ENCODE measurements at regions of chr19 and their contacts with region 1.

Region 1: GRCh38 chr19:3665681-3666544 is 34.4 kb downstream of the PIP5K1C start:
- DNase-seq: no peak
- ATAC-seq: peak; percentile 84
- H3K4me3 ChIP-seq: no peak overlapping the region
- H3K27ac ChIP-seq: no peak overlapping the region
- H3K4me1 ChIP-seq: peaks cover 7% of the 10 kb centered on the region
- H3K27me3 ChIP-seq: no peaks in the 10 kb centered on the region
- CTCF ChIP-seq: peak; percentile 86
- POLR2A ChIP-seq: no peak
- RAD21 ChIP-seq: peak; percentile 85

Region 2: GRCh38 chr19:3700221-3701032 is 34.5 kb after region 1 on chr19 and contains the start of gene PIP5K1C:
- CTCF ChIA-PET with region 1: no interaction called
- POLR2A ChIA-PET with region 1: no interaction called
- dilution Hi-C with region 1: no loop called
- in situ Hi-C with region 1: loop called (anchors 5 kb)
- intact Hi-C with region 1: loop called (anchors 1 kb)
- DNase-seq: peak; percentile 78
- ATAC-seq: peak; percentile 97
- H3K4me3 ChIP-seq: peak within 1 kb of the TSS; percentile 97
- H3K27ac ChIP-seq: peak within 1 kb of the TSS; percentile 77
- H3K4me1 ChIP-seq: peaks cover 8% of the 10 kb centered on the region; the same call in 1 of the 2 replicates
- H3K27me3 ChIP-seq: peaks cover 2% of the 10 kb centered on the region; the same call in 1 of the 2 replicates
- CTCF ChIP-seq: peak; percentile 87
- POLR2A ChIP-seq: peak; percentile 39; the same call in 1 of the 2 replicates
- RAD21 ChIP-seq: peak; percentile 70
- total RNA-seq, gene PIP5K1C: 10.8 and 13.6 TPM in 2 replicates

Region 3: GRCh38 chr19:3821857-3822364 is 156.0 kb after region 1 on chr19:
- CTCF ChIA-PET with region 1: no interaction called
- POLR2A ChIA-PET with region 1: no interaction called
- dilution Hi-C with region 1: no loop called
- in situ Hi-C with region 1: no loop called
- intact Hi-C with region 1: loop called (anchors 5 kb)
- DNase-seq: peak; percentile 10
- ATAC-seq: peak; percentile 93
- H3K4me3 ChIP-seq: no peak overlapping the region
- H3K27ac ChIP-seq: no peak overlapping the region
- H3K4me1 ChIP-seq: no peaks in the 10 kb centered on the region
- H3K27me3 ChIP-seq: peaks cover 15% of the 10 kb centered on the region
- CTCF ChIP-seq: peak; percentile 83
- POLR2A ChIP-seq: no peak
- RAD21 ChIP-seq: peak; percentile 66

Region 4: GRCh38 chr19:3970808-3971598 is 305.1 kb after region 1 on chr19 and contains the start of gene DAPK3:
- CTCF ChIA-PET with region 1: no interaction called
- POLR2A ChIA-PET with region 1: no interaction called
- dilution Hi-C with region 1: no loop called
- in situ Hi-C with region 1: no loop called
- intact Hi-C with region 1: loop called (anchors 5 kb)
- DNase-seq: peak; percentile 97
- ATAC-seq: peak; percentile 77
- H3K4me3 ChIP-seq: peak within 1 kb of the TSS; percentile 81
- H3K27ac ChIP-seq: peak within 1 kb of the TSS; percentile 99
- H3K4me1 ChIP-seq: peaks cover 9% of the 10 kb centered on the region
- H3K27me3 ChIP-seq: no peaks in the 10 kb centered on the region
- CTCF ChIP-seq: no peak
- POLR2A ChIP-seq: peak; percentile 91
- RAD21 ChIP-seq: no peak
- total RNA-seq, gene DAPK3: 128 and 145 TPM in 2 replicates